Posterior vena cava (tissue), 2 donors: ENCODE measurements at regions of chr6 and their contacts with region 1.

Region 1: DNA sequence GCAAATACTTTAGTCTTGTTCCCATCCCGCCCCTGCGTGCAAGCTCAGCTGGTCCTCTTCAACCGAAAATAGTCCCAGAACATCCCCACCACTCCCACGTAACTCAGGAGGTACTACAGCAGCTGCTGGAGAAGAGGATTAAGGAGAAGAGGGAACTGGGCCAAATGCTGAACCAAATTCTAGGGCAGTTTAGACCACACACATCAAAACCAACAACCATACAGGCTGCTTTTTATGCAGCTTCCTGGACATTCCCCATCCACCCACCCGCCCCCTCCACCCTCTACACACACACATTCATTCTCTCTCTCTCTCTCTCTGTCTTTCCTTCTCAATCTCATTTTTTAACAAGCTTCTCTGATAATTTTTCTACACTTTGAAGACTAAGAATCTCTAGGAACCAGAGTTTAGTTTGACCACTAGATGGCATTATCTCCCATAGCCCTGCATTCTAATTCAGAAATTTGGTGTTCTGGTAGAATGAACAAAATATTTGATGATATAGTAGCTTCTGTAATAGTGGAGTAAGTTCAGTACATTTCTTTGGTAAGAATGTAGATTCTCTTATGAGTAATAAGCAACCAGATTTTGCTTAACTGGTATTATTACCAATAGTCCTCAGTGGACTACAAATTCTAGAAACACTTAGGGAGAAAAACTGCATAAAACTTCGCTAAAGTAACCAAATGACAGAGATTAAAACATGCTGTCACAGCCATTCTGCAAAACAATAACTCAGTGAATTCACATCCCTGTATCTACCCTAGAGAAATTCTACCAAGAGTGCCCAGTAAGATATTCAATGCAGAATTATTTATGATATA is 52.1 kb upstream of the BEND6 start:
- DNase-seq: no peak

Region 2: DNA sequence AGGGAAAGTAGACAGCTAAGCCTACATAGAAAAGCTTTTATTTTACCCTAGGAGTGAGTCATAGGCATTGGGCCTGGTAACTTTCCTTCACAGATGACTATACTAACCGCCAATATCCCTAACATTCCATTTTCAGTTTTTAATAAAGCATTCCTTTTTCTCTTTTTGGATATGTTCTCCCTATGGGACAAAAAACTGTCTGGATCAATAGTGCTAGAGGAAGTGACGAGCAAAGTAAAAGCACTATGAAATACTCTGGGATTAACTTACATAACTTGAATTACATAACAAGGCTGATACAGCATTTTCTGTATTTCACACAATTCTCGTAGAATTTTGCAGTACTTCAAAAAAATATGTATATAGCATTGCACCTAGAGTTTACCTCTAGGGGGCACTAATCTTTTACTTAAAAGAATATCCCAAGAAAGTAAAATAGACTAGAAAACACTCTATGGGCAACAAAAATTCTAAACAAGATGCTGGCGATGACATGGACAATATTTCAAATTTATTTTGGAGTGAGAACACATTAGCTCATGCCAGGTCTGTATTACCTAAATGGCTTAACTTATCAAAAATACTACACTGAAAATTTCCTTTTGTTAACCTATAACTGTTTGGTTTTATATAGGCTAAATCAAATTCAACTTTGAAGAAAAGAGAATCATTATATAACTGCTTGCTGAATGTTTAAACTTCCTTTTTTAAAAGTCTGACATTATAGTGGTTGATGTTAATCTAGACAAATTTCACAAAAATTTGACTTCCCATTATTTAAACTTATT is 193.8 kb before region 1 on chr6:
- intact Hi-C with region 1: no loop called
- DNase-seq: no peak

Region 3: GRCh38 chr6:57021086-57021720 is 118.3 kb after region 1 on chr6:
- intact Hi-C with region 1: loop called (anchors 10 kb)
- DNase-seq: no peak

Region 4: GRCh38 chr6:57316581-57317059 is 413.8 kb after region 1 on chr6:
- intact Hi-C with region 1: loop called (anchors 5 kb)
- DNase-seq: peak; percentile 93

Region 5: DNA sequence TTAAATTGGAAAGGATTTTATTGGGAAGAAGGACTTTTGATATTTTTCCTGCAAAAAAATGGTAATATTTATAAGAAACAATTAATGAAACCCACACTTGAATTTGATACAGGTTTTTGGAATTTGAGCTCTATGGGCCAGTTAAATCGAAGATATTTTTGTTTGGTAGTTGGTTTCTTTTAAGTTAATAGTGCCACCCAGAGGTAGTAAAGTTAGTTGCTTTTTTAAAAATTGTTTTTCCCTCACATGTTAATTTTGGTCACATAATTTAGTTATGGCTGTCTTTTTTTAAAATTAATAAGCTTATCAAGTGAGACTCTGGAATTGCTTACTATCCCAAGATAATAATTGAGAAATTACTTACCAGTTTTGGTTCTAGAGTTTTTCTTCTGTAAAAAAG is 421.7 kb after region 1 on chr6:
- intact Hi-C with region 1: loop called (anchors 5 kb)
- DNase-seq: no peak